IMR-90 (cell line): ENCODE measurements at regions of chr1 and their contacts with region 1.

Region 1: GRCh38 chr1:53732912-53733317 is 6.0 kb downstream of the GLIS1 start:
- DNase-seq: peak; percentile 97
- ATAC-seq: peak; percentile 48
- H3K4me3 ChIP-seq: no peak overlapping the region
- H3K27ac ChIP-seq: peak overlapping the region; percentile 95
- H3K4me1 ChIP-seq: peaks cover 37% of the 10 kb centered on the region
- H3K27me3 ChIP-seq: no peaks in the 10 kb centered on the region
- CTCF ChIP-seq: no peak
- POLR2A ChIP-seq: no peak
- RAD21 ChIP-seq: no peak

Region 2: GRCh38 chr1:53249706-53250105 is 483.2 kb before region 1 on chr1:
- CTCF ChIA-PET with region 1: no interaction called
- POLR2A ChIA-PET with region 1: no interaction called
- dilution Hi-C with region 1: no loop called
- in situ Hi-C with region 1: no loop called
- intact Hi-C with region 1: no loop called
- DNase-seq: no peak
- ATAC-seq: no peak
- H3K4me3 ChIP-seq: no peak overlapping the region
- H3K27ac ChIP-seq: no peak overlapping the region
- H3K4me1 ChIP-seq: peaks cover 10% of the 10 kb centered on the region
- H3K27me3 ChIP-seq: no peaks in the 10 kb centered on the region
- CTCF ChIP-seq: no peak
- POLR2A ChIP-seq: no peak
- RAD21 ChIP-seq: no peak

Region 3: DNA sequence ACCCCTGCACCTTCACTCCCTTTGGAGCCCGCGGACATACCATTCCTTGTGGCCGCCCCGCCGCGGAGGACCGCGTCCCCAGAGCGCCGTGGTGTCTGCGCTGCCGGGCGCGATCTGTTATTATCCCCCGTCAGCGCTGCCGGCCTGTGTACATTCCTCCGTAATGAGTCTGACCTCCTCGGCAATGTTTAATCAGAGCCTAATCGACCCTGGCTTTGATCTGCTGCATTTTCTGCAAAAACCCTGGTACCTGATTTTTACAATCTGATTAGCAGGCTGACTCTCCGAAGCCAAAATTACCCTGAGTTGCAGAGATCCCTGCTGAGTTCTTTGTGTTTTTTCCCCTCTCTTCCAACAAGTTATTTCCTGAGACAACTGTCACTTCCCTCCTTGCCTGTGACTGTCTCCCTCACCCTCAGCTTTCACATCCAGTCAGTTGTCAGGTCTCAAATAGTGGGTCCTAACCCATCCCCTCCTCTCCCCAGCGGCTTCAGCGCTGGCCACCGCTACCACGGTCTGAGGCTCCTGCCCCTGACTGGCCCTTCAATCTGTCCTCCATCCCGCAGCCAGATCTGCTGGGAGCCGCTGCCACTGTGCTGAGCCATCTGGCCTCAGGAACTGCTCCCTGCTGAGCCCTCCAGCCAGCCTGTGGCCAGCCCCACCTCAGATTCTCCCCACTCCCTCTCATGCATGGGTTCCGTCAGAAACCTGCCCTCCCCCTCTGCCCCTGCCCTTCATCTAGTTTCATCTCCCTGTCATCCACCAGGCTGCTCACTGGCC is 47.5 kb before region 1 on chr1:
- CTCF ChIA-PET with region 1: no interaction called
- POLR2A ChIA-PET with region 1: no interaction called
- dilution Hi-C with region 1: no loop called
- in situ Hi-C with region 1: no loop called
- intact Hi-C with region 1: loop called (anchors 5 kb)
- DNase-seq: peak; percentile 45
- ATAC-seq: peak; percentile 85
- H3K4me3 ChIP-seq: no peak overlapping the region
- H3K27ac ChIP-seq: peak overlapping the region; percentile 18
- H3K4me1 ChIP-seq: peaks cover 24% of the 10 kb centered on the region
- H3K27me3 ChIP-seq: no peaks in the 10 kb centered on the region
- CTCF ChIP-seq: no peak
- POLR2A ChIP-seq: no peak
- RAD21 ChIP-seq: no peak

Region 4: DNA sequence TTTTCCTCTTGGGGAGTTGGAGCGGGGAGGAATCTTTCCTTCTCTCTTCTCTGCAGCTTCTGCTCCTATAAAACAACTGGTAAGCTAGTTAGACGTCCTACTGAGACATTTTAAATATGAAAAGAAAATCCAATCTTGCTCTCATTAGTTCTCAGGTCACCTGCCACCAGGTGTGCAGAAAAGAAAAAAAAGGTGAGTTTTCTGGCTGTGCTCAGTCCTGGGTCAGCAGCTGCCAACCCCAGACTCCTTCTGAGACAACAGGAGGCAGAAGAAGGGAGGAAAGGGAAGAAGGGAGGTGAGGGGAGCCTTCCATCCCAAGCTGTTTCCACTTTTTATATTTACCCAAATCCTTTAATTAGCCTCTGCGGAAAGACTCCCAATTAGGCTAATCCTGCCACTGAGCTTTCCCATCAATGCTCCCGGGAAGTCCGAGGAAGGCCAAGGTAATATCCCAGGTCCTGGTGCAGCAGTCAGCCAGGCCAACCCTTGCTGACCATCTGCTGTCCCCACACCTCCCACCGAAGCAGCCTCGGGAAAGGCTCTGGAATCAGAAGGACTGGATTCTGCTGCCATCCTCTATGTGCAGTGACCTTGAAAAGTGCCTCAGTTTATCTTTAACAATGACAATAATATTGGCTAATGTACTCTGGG is 27.3 kb before region 1 on chr1:
- CTCF ChIA-PET with region 1: no interaction called
- POLR2A ChIA-PET with region 1: no interaction called
- dilution Hi-C with region 1: no loop called
- in situ Hi-C with region 1: no loop called
- intact Hi-C with region 1: no loop called
- DNase-seq: no peak
- ATAC-seq: no peak
- H3K4me3 ChIP-seq: no peak overlapping the region
- H3K27ac ChIP-seq: no peak overlapping the region
- H3K4me1 ChIP-seq: no peaks in the 10 kb centered on the region
- H3K27me3 ChIP-seq: peaks cover 7% of the 10 kb centered on the region
- CTCF ChIP-seq: no peak
- POLR2A ChIP-seq: no peak
- RAD21 ChIP-seq: no peak